Activated B cell treated with CpG ODN at 0.5 μM for 24 hours (primary cell): ENCODE measurements at regions of chrX and their contacts with region 1.

Region 1: DNA sequence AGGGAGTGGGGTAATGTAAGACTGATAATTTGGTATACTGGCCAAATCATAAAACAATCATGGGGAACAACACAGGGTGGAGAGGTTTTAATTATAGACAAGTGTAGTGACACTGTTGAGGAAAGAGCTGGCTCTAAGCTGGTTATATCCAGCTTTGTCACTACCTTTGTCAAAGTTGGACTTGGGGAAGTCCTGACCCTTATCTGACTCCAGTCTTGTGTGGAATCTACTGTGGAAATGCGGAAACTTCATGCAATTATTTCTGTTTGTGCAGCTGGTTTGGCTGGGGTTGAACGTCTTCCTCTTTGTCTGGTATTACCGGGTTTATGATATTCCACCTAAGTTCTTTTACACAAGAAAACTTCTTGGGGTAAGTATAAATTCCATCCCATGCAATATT is 2.0 kb downstream of the CYBB start:
- DNase-seq: no peak
- ATAC-seq: no peak
- H3K4me3 Mint-ChIP-seq: peak overlapping the region; percentile 86
- H3K27ac Mint-ChIP-seq: peak overlapping the region; percentile 89
- H3K4me1 Mint-ChIP-seq: peaks cover 66% of the 10 kb centered on the region
- H3K27me3 Mint-ChIP-seq: no peaks in the 10 kb centered on the region
- CTCF ChIP-seq: no peak

Region 2: DNA sequence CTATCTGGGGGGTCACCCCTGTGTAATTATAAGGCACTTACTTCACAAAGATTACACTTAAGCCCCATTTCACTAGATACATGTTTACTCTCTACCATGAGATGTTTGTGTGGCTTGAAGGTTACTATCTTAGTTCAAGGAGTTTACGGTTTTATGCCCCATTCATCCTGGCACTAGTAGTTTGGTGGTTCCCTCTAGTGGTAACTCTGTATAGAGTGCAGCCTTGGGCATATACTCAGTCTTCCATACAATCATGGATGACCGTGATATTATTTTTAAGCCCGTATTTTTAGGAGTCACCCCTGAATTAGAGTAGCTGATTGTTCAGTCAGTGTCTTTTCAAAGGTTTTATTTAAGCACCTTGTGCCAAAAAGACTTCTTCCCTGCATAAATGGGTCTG is 883.5 kb before region 1 on chrX:
- CTCF ChIA-PET with region 1: no interaction called
- POLR2A ChIA-PET with region 1: no interaction called
- intact Hi-C with region 1: no loop called
- DNase-seq: no peak
- ATAC-seq: no peak
- H3K4me3 Mint-ChIP-seq: no peak overlapping the region
- H3K27ac Mint-ChIP-seq: no peak overlapping the region
- H3K4me1 Mint-ChIP-seq: no peaks in the 10 kb centered on the region
- H3K27me3 Mint-ChIP-seq: no peaks in the 10 kb centered on the region
- CTCF ChIP-seq: no peak

Region 3: DNA sequence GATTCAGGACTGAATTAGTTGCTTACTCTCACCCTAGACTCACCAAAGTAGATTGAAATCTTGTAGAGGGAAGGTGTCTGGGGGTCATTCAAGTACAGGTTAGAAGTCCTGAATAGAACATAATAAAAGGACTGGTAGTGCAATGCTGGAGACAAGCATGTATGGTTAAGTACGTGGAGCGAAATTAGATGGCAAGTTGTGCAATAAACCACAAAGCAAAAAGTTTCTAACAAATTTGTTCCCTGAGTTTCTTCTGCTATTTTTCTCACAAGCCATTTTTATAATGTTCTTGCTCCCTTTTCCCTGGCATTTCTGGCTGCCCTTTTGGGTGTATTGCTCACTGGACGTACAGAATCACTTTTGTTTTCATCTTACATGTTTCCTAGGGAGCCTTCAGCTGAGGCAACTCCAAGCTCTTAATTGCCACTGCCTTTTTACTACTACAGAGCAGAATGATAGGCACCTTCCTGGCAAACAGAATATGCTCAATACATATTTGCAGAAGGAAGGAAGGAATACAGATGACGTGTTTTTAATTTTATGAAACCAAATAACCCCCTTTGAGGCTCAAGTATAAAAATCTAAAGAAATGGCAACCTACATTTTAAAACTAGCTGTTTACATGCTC is 186.9 kb before region 1 on chrX:
- CTCF ChIA-PET with region 1: no interaction called
- POLR2A ChIA-PET with region 1: no interaction called
- intact Hi-C with region 1: no loop called
- DNase-seq: no peak
- ATAC-seq: no peak
- H3K4me3 Mint-ChIP-seq: no peak overlapping the region
- H3K27ac Mint-ChIP-seq: no peak overlapping the region
- H3K4me1 Mint-ChIP-seq: no peaks in the 10 kb centered on the region
- H3K27me3 Mint-ChIP-seq: peaks cover 4% of the 10 kb centered on the region
- CTCF ChIP-seq: no peak

Region 4: DNA sequence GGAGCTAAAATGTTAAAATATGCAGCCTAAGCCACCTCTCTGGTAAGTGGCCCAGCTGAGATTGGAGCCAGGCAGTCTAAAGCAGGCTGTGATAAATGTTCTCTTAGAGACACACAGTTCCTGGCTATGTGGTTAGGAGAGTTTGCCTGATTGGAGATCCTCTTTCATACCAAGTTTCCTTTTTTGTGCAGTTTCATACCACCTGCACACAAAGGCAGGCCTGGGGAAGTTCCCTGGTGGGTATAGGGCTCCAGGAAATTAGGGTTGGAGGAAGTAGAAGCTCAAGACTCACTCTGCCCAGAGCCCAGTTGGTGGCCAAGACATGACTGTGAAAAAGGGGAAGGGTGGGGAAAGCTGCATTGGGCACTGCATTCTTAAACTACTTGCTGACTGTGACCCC is 15.0 kb after region 1 on chrX:
- CTCF ChIA-PET with region 1: no interaction called
- POLR2A ChIA-PET with region 1: interaction called, 23 read pairs
- intact Hi-C with region 1: loop called (anchors 1 kb)
- DNase-seq: no peak
- ATAC-seq: peak; percentile 90
- H3K4me3 Mint-ChIP-seq: peak overlapping the region; percentile 28
- H3K27ac Mint-ChIP-seq: peak overlapping the region; percentile 79
- H3K4me1 Mint-ChIP-seq: peaks cover 79% of the 10 kb centered on the region
- H3K27me3 Mint-ChIP-seq: no peaks in the 10 kb centered on the region
- CTCF ChIP-seq: no peak